Activated CD4-positive, alpha-beta T cell treated with anti-CD3 and anti-CD28 coated beads, Interleukin-2, amount 10 ng/mL, durations not matched to agents 24 days and 14 days (primary cell): ENCODE measurements at regions of chr6 and their contacts with region 1.

Region 1: GRCh38 chr6:27672113-27672799 is 199.4 kb upstream of the ZNF184 start:
- DNase-seq: peak; percentile 80
- H3K4me3 Mint-ChIP-seq: peak overlapping the region; percentile 65
- H3K27ac Mint-ChIP-seq: peak overlapping the region; percentile 31
- H3K4me1 Mint-ChIP-seq: peaks cover 41% of the 10 kb centered on the region
- H3K27me3 Mint-ChIP-seq: peaks cover 69% of the 10 kb centered on the region

Region 2: GRCh38 chr6:27267857-27268434 is 404.3 kb before region 1 on chr6:
- intact Hi-C with region 1: no loop called
- DNase-seq: no peak
- H3K4me3 Mint-ChIP-seq: no peak overlapping the region
- H3K27ac Mint-ChIP-seq: no peak overlapping the region
- H3K4me1 Mint-ChIP-seq: peaks cover 2% of the 10 kb centered on the region
- H3K27me3 Mint-ChIP-seq: peaks cover 30% of the 10 kb centered on the region

Region 3: GRCh38 chr6:27295301-27296081 is 376.8 kb before region 1 on chr6:
- intact Hi-C with region 1: loop called (anchors 5 kb)
- DNase-seq: no peak
- H3K4me3 Mint-ChIP-seq: no peak overlapping the region
- H3K27ac Mint-ChIP-seq: peak overlapping the region; percentile 36
- H3K4me1 Mint-ChIP-seq: peaks cover 1% of the 10 kb centered on the region
- H3K27me3 Mint-ChIP-seq: peaks cover 60% of the 10 kb centered on the region

Region 4: GRCh38 chr6:27575594-27576361 is 96.5 kb before region 1 on chr6:
- intact Hi-C with region 1: no loop called
- DNase-seq: no peak
- H3K4me3 Mint-ChIP-seq: no peak overlapping the region
- H3K27ac Mint-ChIP-seq: no peak overlapping the region
- H3K4me1 Mint-ChIP-seq: no peaks in the 10 kb centered on the region
- H3K27me3 Mint-ChIP-seq: peaks cover 17% of the 10 kb centered on the region

Region 5: GRCh38 chr6:27592481-27593199 is 79.6 kb before region 1 on chr6:
- intact Hi-C with region 1: loop called (anchors 5 kb)
- DNase-seq: peak; percentile 83
- H3K4me3 Mint-ChIP-seq: no peak overlapping the region
- H3K27ac Mint-ChIP-seq: no peak overlapping the region
- H3K4me1 Mint-ChIP-seq: peaks cover 2% of the 10 kb centered on the region
- H3K27me3 Mint-ChIP-seq: peaks cover 27% of the 10 kb centered on the region

Region 6: DNA sequence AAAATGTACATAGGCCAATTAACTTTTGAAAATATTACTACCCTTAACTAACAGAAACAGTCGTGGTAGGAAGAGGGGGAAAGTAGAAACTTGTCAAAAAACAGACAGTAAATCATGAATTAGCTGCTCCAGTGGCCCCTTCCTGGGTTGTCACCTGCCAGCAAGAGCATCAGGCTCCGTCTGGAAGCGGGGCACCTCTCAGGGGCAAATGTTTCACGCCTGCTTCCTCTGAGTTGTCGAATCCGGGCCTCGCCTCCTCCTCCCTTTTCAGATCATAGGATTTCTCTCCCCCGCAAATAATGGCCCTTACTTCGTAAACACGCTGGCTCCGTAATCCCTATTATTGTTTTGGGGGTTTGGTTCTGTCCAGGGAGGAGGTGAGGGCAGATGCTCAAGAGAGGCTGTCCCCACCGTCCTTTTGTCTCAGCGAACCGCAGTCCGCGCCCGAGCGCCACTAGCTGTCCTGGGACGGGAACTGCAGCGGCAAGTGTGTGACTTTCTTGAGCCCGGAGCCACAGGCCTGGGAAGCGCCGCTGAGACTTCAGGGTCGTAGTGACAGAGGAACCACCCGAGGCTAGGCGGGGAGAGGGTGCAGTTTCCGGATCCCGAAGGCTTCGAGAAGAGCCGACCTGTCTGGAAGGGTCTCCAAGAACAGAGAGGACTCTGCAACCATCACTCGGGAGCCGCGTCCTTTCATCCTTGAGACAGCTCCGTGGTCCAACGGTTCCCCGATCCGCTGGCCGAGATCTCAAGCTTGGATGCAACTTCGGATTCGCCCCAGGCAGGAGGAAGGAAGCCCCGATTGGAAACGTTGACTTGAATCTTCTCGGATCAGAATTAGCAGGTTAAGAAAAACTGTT is 15.1 kb after region 1 on chr6:
- intact Hi-C with region 1: loop called (anchors 2 kb)
- DNase-seq: peak; percentile 92
- H3K4me3 Mint-ChIP-seq: peak overlapping the region; percentile 91
- H3K27ac Mint-ChIP-seq: peak overlapping the region; percentile 86
- H3K4me1 Mint-ChIP-seq: peaks cover 18% of the 10 kb centered on the region
- H3K27me3 Mint-ChIP-seq: peaks cover 21% of the 10 kb centered on the region